ENCODE measurements at regions of chr1 and their contacts with region 1.

Region 1: DNA sequence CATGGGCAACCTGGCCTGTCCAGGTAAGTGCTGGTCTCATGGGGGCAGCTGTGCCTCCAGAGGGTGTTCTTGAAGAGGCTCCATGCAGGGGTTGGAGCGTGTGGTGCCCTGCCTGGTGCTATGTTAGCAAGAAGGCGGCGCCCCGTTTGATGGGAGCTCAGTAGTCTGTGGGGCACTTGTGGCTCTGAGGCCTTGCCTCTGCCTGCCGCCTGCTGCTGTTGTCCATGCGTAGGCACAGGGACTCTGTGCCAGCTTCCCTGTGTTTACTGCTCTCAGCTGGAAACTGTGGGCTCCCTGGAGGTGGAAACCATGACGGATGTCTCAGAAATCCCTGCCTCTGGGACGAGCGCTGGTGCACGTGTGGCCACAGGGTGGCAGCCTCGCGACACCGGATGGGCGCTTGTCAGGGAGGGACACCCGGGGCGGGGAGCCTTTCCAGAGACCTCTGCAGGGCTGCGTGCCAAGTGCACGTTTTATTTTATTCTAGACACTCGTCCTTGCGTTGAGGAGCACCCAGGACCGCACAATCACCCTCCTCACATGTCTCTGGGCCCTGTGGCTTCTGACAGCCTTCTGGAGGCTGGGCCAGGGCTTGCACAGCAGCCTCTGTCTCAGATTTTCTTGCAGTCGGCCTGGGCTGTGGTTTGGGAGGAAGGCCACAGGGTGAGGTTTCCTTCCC is 27.1 kb downstream of the SNAP47 start:
- DNase-seq: peak; percentile 93
- H3K4me3 Mint-ChIP-seq: no peak overlapping the region
- H3K27ac Mint-ChIP-seq: no peak overlapping the region
- H3K4me1 Mint-ChIP-seq: peaks cover 74% of the 10 kb centered on the region
- H3K27me3 Mint-ChIP-seq: no peaks in the 10 kb centered on the region
- CTCF ChIP-seq: peak; percentile 99

Region 2: DNA sequence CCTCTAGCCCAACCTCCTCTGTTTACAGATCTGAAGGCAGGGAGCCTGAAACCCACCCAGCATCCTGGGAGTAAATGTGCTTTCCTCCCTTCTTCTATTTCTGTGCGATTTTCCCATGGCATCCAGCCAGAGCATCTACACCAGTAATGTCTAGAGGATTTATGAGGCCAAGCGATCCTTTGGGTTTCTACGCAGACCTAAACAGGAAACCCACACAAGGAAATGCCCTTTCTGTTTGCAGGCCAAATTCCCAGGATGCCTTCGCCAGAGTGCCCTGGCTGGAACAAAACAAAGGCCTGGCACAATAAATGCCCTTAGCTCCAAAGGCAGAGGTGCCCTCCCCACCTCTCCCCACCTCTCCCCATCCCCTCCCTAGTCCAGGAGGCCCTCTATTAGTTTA is 333.6 kb before region 1 on chr1:
- CTCF ChIA-PET with region 1: no interaction called
- POLR2A ChIA-PET with region 1: no interaction called
- intact Hi-C with region 1: no loop called
- DNase-seq: peak; percentile 30
- H3K4me3 Mint-ChIP-seq: no peak overlapping the region
- H3K27ac Mint-ChIP-seq: no peak overlapping the region
- H3K4me1 Mint-ChIP-seq: no peaks in the 10 kb centered on the region
- H3K27me3 Mint-ChIP-seq: no peaks in the 10 kb centered on the region
- CTCF ChIP-seq: no peak

Region 3: GRCh38 chr1:227466039-227466645 is 296.2 kb before region 1 on chr1:
- CTCF ChIA-PET with region 1: no interaction called
- POLR2A ChIA-PET with region 1: no interaction called
- intact Hi-C with region 1: no loop called
- DNase-seq: no peak
- H3K4me3 Mint-ChIP-seq: no peak overlapping the region
- H3K27ac Mint-ChIP-seq: no peak overlapping the region
- H3K4me1 Mint-ChIP-seq: no peaks in the 10 kb centered on the region
- H3K27me3 Mint-ChIP-seq: peaks cover 11% of the 10 kb centered on the region
- CTCF ChIP-seq: no peak

Region 4: DNA sequence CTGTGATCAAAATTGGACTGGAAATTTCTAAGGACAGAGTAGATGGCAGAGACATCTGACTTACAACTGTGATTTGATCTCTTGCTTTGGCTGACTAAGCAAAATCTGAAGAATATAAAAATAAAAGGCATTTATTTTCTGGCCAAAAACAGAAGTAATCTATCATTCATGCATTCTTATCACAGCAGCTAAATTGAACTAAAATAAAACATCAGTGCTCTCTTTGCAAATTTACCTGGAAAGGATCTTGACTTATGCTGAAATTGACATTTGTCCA is 280.4 kb before region 1 on chr1:
- CTCF ChIA-PET with region 1: interaction called, 23 read pairs
- POLR2A ChIA-PET with region 1: interaction called, 7 read pairs
- intact Hi-C with region 1: loop called (anchors 1 kb)
- DNase-seq: no peak
- H3K4me3 Mint-ChIP-seq: no peak overlapping the region
- H3K27ac Mint-ChIP-seq: no peak overlapping the region
- H3K4me1 Mint-ChIP-seq: no peaks in the 10 kb centered on the region
- H3K27me3 Mint-ChIP-seq: peaks cover 66% of the 10 kb centered on the region
- CTCF ChIP-seq: no peak

Region 5: DNA sequence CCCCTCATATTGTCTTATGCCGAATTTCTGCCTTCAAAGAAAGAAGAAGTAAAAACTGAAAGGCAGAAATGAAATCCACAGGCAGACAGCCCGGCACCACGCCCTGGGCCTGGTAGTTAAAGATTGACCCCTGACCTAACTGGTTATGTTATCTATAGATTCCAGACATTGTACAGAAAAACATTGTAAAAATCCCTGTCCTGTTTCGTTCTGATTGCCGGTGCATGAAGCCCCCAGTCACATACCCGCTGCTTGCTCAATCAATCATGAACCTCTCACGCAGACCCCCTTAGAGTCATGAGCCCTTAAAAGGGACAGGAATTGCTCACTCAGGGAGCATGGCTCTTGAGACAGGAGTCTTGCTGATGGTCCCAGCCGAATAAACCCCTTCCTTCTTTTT is 76.6 kb before region 1 on chr1:
- CTCF ChIA-PET with region 1: no interaction called
- POLR2A ChIA-PET with region 1: no interaction called
- intact Hi-C with region 1: no loop called
- DNase-seq: no peak
- H3K4me3 Mint-ChIP-seq: no peak overlapping the region
- H3K27ac Mint-ChIP-seq: no peak overlapping the region
- H3K4me1 Mint-ChIP-seq: no peaks in the 10 kb centered on the region
- H3K27me3 Mint-ChIP-seq: no peaks in the 10 kb centered on the region
- CTCF ChIP-seq: no peak

Region 6: GRCh38 chr1:227742738-227743715 is 19.3 kb before region 1 on chr1:
- CTCF ChIA-PET with region 1: interaction called, 13 read pairs
- POLR2A ChIA-PET with region 1: interaction called, 3 read pairs
- intact Hi-C with region 1: no loop called
- DNase-seq: no peak
- H3K4me3 Mint-ChIP-seq: no peak overlapping the region
- H3K27ac Mint-ChIP-seq: no peak overlapping the region
- H3K4me1 Mint-ChIP-seq: peaks cover 30% of the 10 kb centered on the region
- H3K27me3 Mint-ChIP-seq: no peaks in the 10 kb centered on the region
- CTCF ChIP-seq: no peak

Region 7: DNA sequence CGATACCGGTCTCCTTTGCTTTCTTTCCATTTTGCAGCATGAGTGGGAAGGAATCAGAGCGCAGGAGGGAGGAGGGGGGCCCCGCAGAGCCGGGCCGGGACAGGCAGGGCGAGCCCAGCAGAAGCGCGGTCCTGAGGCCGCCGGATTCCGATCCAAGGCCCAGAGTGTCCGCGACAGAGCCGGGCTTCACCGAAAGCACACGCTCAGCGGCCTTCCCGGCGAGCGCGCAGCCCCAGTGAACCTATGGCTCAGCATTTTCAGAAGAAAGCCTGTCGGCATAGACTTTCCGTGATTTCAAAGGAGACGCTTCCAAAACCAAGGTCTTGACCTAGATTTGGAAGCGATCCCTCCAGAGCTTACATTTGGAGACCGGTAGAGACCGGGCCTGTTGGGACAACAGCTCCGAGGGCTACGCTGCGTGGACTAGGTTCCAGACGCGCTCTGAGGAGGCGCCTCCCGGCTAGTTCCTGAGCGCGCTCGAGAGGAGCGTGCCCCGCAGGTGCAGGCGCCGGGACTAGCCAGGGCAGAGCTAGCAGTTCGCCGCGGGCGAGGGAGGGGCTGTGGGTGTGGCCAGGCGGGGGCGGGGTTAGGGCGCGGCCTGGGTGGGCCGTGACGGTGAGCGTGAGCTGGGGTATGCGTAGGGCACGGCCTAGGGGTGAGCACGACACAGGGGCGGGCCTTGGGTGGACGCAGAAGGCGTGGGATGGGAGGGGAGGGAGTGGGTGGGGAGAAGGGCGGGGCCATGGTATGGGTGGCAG is 25.3 kb after region 1 on chr1:
- CTCF ChIA-PET with region 1: interaction called, 22 read pairs
- POLR2A ChIA-PET with region 1: interaction called, 16 read pairs
- intact Hi-C with region 1: no loop called
- DNase-seq: peak; percentile 97
- H3K4me3 Mint-ChIP-seq: peak overlapping the region; percentile 71
- H3K27ac Mint-ChIP-seq: peak overlapping the region; percentile 49
- H3K4me1 Mint-ChIP-seq: peaks cover 5% of the 10 kb centered on the region
- H3K27me3 Mint-ChIP-seq: no peaks in the 10 kb centered on the region
- CTCF ChIP-seq: no peak

Region 8: GRCh38 chr1:227934476-227935313 is 172.3 kb after region 1 on chr1:
- CTCF ChIA-PET with region 1: interaction called, 8 read pairs
- POLR2A ChIA-PET with region 1: interaction called, 10 read pairs
- intact Hi-C with region 1: no loop called
- DNase-seq: peak; percentile 99
- H3K4me3 Mint-ChIP-seq: no peak overlapping the region
- H3K27ac Mint-ChIP-seq: peak overlapping the region; percentile 18
- H3K4me1 Mint-ChIP-seq: peaks cover 16% of the 10 kb centered on the region
- H3K27me3 Mint-ChIP-seq: no peaks in the 10 kb centered on the region
- CTCF ChIP-seq: no peak

Region 9: GRCh38 chr1:228004331-228004855 is 242.0 kb after region 1 on chr1:
- CTCF ChIA-PET with region 1: interaction called, 37 read pairs
- POLR2A ChIA-PET with region 1: no interaction called
- intact Hi-C with region 1: no loop called
- DNase-seq: peak; percentile 82
- H3K4me3 Mint-ChIP-seq: no peak overlapping the region
- H3K27ac Mint-ChIP-seq: no peak overlapping the region
- H3K4me1 Mint-ChIP-seq: peaks cover 10% of the 10 kb centered on the region
- H3K27me3 Mint-ChIP-seq: peaks cover 37% of the 10 kb centered on the region
- CTCF ChIP-seq: peak; percentile 88

Measured in MCF 10A (cell line).